ENCODE measurements at regions of chr1 and their contacts with region 1.

Region 1: DNA sequence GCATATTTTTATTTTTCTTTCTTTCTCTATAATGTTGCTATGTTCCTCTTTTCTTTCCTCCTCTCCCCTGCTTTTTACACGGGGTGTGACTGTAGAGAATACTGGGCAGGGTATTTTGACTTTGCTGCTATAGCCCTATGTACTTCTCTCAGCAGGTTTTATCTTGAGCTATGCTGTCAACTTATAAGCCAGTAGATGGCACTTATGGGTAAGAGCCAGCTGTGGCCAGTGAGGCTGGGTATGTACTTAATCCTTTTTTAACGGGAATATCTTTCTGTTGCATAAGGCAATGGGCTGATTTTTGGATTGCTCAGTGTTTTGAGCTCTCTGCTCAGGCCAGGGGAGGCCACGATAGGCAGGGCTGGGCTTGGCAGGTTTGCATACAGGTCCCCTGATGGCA is 99.0 kb downstream of the KCNK2 start:
- DNase-seq: no peak
- ATAC-seq: peak; percentile 92
- H3K4me3 Mint-ChIP-seq: no peak overlapping the region
- H3K27ac Mint-ChIP-seq: no peak overlapping the region
- H3K4me1 Mint-ChIP-seq: no peaks in the 10 kb centered on the region
- H3K27me3 Mint-ChIP-seq: no peaks in the 10 kb centered on the region
- CTCF ChIP-seq: no peak

Region 2: GRCh38 chr1:215269955-215270354 is 88.4 kb after region 1 on chr1:
- CTCF ChIA-PET with region 1: interaction called, 11 read pairs
- POLR2A ChIA-PET with region 1: no interaction called
- DNase-seq: peak; percentile 31
- ATAC-seq: peak; percentile 95
- H3K4me3 Mint-ChIP-seq: no peak overlapping the region
- H3K27ac Mint-ChIP-seq: no peak overlapping the region
- H3K4me1 Mint-ChIP-seq: peaks cover 5% of the 10 kb centered on the region
- H3K27me3 Mint-ChIP-seq: no peaks in the 10 kb centered on the region
- CTCF ChIP-seq: no peak

Measured in WTC11 (cell line).